ENCODE measurements at regions of chr17 and their contacts with region 1.

Region 1: DNA sequence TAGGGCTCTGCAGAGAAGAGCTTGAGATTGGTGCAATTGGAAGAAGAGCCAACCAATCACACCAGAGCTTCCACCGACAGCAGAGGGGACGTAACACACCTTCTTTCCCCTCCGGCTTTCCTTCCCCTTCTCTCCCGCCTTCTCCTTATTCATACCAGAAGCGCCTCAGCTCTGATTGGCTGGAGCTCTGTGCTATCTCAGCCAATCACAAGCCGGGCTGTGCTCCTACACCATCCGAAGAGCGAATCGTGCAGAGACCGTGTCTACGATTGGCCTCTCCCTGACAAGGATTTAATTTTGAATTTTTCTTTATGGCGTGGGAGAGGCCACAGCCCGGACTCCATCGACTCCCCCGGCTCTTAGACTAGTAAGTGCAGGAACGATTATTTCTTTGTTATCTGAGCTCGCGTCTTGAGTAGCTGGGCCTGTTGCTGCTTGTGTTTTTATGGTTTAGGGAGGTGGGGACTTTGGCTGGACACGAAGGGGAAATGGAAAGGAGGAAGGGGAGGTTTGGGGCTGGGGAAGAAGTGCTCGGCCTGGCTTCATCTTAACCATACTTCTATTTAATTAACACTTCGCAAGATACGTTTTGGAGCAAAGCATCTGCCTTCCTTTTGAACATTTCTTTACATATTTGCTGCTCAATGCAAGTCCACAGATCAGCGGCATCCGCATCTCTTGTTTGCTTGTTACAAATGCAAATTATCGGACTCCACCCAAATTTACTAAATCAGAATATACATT is at the start of gene PRR11:
- DNase-seq: peak; percentile 91 to 99 (median 95)

Region 2: GRCh38 chr17:59220376-59221158 is 65.0 kb after region 1 on chr17 and contains the start of gene GDPD1:
- intact Hi-C with region 1: loop called (anchors 10 kb)
- DNase-seq: peak; percentile 90 to 99 (median 96)

Region 3: DNA sequence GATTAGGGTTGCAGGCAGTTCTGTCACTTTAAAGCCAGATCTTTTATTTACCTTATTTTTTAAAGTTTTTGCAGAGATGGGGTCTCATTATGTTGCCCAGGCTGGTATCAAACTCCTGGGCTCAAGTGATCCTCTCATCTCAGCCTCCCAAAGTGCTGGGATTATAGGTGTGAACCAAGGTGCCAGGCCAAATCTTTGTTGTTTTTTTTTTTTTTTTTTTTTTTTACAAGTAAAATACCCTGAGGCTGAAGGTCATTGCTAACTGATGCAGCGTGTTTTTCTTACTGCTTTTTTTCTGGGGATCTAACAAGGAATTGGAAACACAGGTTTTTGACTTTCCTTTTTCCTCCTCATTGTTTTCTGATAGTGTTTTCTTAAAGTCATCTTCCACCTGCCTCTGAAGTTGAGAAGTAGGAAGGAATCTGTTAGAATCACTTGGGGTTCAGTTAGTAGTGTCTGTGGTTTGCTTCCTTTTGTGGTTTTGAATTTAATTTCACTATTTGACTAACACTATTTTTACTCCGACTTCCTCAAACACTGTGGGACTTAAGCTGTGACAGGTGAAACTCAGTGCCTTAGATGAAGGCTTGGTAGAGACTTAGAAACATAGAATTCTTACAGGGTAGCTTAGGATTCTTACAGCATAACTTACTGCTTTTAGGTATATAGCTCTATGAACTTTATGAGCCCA is 486.3 kb after region 1 on chr17:
- intact Hi-C with region 1: no loop called
- DNase-seq: no peak

Measured in posterior cingulate gyrus (tissue), 11 donors.